Activated T-helper 2 cell treated with anti-CD3 and anti-CD28 coated beads, Interferon-gamma antibody, Interleukin-2, Interleukin-4, amounts not matched to agents 10 μg/mL and 5 μg/mL and 100 μg/mL, durations not matched to agents 14 hours and 24 hours and 36 hours (primary cell): ENCODE measurements at regions of chr4 and their contacts with region 1.

Region 1: DNA sequence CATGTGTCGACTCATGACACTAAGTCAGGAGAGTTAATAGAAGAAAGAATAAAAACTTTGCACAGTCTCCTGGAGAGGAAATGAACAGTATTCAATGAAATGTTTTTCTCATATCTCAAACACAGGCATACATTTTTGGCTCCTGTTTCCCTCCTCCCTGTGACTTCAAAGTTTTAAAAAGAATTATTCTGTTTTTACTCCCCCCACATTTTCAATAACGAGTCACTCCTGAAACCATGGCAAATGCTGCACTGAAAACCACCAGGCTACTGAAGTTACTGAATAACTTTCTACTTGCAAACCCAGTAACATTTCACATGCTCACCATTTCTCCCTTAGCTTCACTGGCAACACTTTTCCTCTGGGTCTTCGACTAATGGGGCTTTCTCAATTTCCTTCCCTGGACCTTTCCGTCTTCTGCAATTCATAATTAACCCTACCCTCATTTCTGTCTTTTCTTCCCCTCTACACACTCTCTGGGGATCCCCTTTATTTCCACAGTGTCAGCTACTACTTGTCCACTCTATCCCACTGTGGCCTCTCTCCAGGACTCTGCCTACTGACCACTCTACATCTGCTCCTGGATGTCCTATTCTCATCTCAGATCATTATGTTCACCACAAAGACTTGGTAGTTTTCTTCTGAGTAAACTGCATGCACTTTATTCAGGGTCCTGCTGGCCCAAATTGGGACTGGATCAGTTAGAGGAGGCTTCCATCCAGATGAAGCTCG is 225.8 kb upstream of the ETNPPL start:
- DNase-seq: no peak
- H3K4me3 Mint-ChIP-seq: no peak overlapping the region
- H3K27ac Mint-ChIP-seq: no peak overlapping the region
- H3K4me1 Mint-ChIP-seq: no peaks in the 10 kb centered on the region
- H3K27me3 Mint-ChIP-seq: no peaks in the 10 kb centered on the region

Region 2: DNA sequence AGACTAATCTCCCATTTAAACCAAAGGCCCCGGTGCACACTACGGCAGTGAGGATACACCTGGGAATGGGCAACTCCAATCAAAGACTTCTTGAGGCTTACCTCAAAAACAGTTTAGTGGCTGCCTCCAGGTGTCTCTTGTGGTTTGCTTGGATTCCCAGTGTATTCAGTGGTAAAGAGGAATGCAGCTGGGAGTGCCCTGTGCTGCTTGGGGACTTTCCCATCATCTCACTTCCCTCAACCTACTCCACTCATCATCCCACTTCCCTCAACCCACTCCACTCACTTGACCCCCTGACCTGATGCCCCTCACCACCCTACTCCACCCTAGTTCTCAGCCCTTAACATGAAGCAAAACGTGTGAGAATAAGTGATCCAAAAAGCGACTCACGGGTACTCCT is 48.5 kb before region 1 on chr4:
- intact Hi-C with region 1: no loop called
- DNase-seq: no peak
- H3K4me3 Mint-ChIP-seq: no peak overlapping the region
- H3K27ac Mint-ChIP-seq: no peak overlapping the region
- H3K4me1 Mint-ChIP-seq: peaks cover 4% of the 10 kb centered on the region
- H3K27me3 Mint-ChIP-seq: peaks cover 2% of the 10 kb centered on the region

Region 3: DNA sequence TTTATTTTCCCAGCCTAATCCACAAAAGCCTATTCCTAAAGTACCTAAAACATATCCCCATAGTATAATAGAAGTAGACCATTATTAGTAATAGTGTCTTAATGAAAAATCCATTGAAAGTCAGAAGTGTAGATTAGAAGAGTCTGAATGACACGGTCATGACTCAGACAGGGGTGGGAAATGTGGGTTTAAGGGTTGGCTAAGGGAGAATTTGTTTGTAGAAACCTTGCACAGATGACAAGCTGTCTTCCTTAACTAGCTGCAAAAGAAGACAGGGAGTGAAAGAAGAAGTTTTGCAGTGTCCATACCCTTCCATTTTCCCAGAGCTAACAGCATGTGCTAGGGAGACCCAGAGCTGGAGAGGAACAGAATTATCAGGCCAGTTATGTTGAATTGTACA is 16.9 kb after region 1 on chr4:
- intact Hi-C with region 1: loop called (anchors 2 kb)
- DNase-seq: no peak
- H3K4me3 Mint-ChIP-seq: no peak overlapping the region
- H3K27ac Mint-ChIP-seq: peak overlapping the region; percentile 62
- H3K4me1 Mint-ChIP-seq: peaks cover 17% of the 10 kb centered on the region
- H3K27me3 Mint-ChIP-seq: no peaks in the 10 kb centered on the region